Sigmoid colon (tissue), 7 donors: ENCODE measurements at regions of chr11 and their contacts with region 1.

Region 1: GRCh38 chr11:64894070-64894796 is 15.8 kb upstream of the EHD1 start:
- DNase-seq: peak; percentile 90
- H3K4me3 ChIP-seq: no peak overlapping the region
- H3K27ac ChIP-seq: peak overlapping the region in 1 of 4 donors; percentile 55
- H3K4me1 ChIP-seq: peaks cover 0 to 5% (median 2%) of the 10 kb centered on the region in 4 donors
- H3K27me3 ChIP-seq: no peaks in the 10 kb centered on the region
- CTCF ChIP-seq: peak; percentile 89 to 96 (median 92)
- EP300 ChIP-seq: no peak
- POLR2A ChIP-seq: no peak

Region 2: GRCh38 chr11:64846998-64847666 is 47.1 kb before region 1 on chr11:
- intact Hi-C with region 1: loop called (anchors 1 kb)
- DNase-seq: peak; percentile 96
- H3K4me3 ChIP-seq: no peak overlapping the region
- H3K27ac ChIP-seq: peak overlapping the region in 2 of 4 donors; percentile 10 to 22
- H3K4me1 ChIP-seq: peaks cover 0 to 52% (median 35%) of the 10 kb centered on the region in 4 donors
- H3K27me3 ChIP-seq: peaks cover 0 to 10% (median 0%) of the 10 kb centered on the region in 3 donors
- CTCF ChIP-seq: peak; percentile 92 to 97 (median 96)
- EP300 ChIP-seq: no peak
- POLR2A ChIP-seq: no peak